WTC11 (cell line): ENCODE measurements at regions of chr2 and their contacts with region 1.

Region 1: DNA sequence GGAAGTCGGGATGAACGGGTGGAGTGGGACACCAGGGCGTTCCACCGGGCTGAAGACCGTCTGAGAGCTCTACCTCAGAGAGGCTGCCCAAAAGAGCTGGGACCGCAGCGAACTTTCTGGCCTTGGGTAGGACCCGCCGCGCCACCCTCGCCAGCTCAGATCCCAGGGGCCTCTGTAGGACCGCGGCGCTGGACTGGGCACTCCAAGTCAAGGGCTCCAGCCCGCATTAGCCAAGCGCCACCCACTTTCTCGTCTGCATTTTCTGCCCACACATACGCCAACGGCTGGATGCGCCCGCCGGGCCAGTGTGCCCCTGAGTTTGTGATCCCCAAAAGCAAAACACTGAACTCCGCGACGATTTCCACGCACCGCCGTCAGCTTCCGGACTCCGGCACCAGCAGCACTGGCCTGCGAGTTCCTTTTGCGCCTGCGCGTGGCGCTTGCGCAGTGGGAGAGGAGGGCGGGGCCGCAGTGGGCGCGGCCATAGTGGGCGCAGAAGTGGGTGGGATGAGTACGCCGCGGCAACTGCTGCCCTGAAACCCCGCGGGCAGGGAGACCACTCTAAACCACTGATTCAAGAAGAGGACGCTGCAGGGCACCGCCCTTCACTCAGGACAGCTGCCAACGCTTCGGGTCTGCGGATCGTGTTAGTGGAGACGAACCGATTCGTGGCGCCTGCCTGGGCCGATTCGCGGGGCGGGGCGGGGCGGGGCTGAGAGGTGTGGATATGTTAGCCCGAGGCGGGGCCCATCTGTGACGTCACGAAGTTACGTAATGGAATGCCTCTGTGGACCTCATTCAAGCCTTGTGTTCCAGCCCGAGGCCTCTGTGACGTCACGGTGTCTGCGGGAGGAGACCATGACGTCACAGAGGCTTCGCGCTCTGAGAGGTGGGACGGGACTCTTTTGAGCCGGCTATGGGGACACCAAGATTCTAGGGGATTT is 10.5 kb downstream of the OSR1 start:
- DNase-seq: peak; percentile 90
- ATAC-seq: peak; percentile 66
- H3K4me3 Mint-ChIP-seq: peak overlapping the region; percentile 94
- H3K27ac Mint-ChIP-seq: peak overlapping the region; percentile 89
- H3K4me1 Mint-ChIP-seq: peaks cover 21% of the 10 kb centered on the region
- H3K27me3 Mint-ChIP-seq: peaks cover 65% of the 10 kb centered on the region
- CTCF ChIP-seq: no peak

Region 2: DNA sequence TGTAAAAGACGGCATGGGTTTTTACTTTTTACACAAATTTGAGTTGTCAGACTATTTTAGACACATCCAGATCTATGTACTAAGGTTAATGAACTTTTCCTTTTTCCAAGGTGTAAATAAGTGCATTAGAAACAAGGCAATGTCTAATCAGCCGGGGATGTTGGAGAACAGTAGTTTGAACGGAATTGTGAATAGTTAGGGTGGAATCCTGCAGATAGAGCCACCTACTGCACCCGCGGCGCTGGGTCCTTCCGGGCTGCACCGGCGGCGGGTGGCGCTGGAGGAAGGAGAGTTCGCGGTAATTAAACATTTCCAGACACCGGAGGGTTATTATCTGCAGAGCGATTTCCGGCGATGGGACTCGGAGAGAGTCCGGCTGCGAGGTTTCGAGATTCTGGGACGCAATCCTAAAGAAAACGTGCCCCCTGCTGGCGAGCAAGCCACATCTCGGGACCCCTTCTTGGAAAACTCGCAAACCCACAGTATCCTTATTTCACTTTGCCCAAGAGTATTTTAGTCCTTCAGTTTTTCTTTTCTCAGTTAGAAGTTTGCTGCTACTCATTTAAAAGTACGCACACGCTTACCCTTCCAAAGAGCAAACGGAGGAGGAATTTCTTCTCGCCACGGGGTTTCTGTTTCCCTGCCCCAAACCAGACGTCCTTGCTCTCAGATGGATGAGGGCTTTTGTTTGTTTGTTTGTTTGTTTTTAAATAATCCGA is 15.0 kb after region 1 on chr2:
- CTCF ChIA-PET with region 1: interaction called, 73 read pairs
- POLR2A ChIA-PET with region 1: interaction called, 5 read pairs
- DNase-seq: peak; percentile 71
- ATAC-seq: no peak
- H3K4me3 Mint-ChIP-seq: peak overlapping the region; percentile 70
- H3K27ac Mint-ChIP-seq: no peak overlapping the region
- H3K4me1 Mint-ChIP-seq: peaks cover 32% of the 10 kb centered on the region
- H3K27me3 Mint-ChIP-seq: peaks cover 92% of the 10 kb centered on the region
- CTCF ChIP-seq: peak; percentile 70

Region 3: GRCh38 chr2:19369341-19369955 is 21.6 kb after region 1 on chr2:
- CTCF ChIA-PET with region 1: interaction called, 11 read pairs
- POLR2A ChIA-PET with region 1: no interaction called
- DNase-seq: no peak
- ATAC-seq: peak; percentile 74
- H3K4me3 Mint-ChIP-seq: no peak overlapping the region
- H3K27ac Mint-ChIP-seq: no peak overlapping the region
- H3K4me1 Mint-ChIP-seq: no peaks in the 10 kb centered on the region
- H3K27me3 Mint-ChIP-seq: peaks cover 40% of the 10 kb centered on the region
- CTCF ChIP-seq: no peak

Region 4: DNA sequence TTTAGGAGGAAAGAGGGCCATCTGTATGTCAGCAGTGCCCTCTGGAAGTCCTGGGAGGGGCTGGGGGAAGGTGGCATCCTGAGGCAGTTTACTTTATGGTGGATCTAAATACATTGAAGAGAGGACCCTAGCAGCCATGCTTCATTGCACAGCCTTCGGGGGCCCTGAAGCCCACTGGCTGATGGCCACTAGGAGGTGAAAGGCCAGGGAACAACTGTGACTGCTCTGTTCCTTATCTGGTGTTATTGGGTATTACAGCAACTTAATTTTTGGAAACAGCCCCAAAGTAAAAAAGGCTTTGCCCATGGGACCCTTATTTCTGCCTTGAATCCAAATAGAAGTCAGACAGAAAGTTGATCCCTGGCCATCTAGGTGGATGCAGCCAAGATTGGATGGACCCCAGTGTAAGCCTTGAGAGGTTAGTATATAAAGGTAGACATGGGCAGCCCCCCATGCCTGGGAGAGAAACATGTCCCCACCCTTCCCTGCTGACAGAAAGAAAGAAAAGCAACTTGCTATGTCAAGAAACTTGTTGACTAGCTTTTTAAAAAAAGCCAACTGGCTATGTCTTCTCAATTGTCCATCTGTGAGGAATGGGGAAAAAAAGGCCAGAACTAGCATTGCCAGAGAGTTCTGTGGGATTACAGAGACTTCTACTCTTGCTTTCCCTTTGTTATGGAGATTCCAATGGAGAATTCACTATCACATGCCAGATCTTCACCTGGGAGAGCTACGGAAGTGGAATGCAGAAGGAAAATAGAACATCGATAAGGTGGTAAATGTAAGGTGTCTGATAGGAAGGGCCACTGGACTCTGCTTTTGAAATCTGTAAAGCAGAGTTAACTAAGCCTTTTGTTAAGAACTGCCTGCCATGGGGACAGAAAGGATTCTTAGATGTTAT is 69.1 kb after region 1 on chr2:
- CTCF ChIA-PET with region 1: no interaction called
- POLR2A ChIA-PET with region 1: no interaction called
- DNase-seq: no peak
- ATAC-seq: peak; percentile 77
- H3K4me3 Mint-ChIP-seq: no peak overlapping the region
- H3K27ac Mint-ChIP-seq: no peak overlapping the region
- H3K4me1 Mint-ChIP-seq: peaks cover 18% of the 10 kb centered on the region
- H3K27me3 Mint-ChIP-seq: no peaks in the 10 kb centered on the region
- CTCF ChIP-seq: no peak

Region 5: DNA sequence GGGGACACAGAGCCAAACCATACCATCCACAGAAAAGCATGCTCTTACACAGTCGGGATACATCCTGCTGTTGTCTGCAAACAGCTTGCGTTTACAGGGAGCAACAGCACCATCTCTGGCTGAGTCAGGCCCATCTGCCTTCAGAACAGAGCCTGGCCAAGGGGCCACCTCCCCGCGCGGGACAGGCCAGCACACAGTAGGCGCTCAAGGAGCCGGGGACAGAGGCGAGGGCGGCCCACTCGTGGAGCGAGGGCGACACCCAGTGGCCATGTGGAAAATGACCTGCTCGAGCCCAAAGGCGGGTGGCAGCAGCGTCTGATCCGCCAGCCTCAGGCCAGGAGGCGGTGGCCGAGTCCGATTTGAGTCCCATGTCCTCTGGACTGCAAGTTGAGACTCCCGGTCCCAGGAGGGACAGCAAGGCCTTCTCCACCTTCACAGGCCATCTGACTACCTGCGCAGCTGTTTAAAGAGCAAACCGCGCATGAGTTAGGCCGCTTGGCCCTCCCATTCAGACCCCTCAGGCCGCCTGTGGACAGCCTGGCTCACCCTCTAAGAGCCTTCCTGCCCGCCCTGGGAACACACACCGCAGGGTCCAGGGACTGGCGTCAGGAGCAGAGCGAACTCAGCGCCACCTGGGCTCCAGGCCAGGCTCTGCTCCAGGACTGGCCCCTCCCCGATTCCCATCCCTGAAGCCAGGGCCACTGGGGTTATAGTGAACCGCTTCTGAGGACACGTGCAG is 515.6 kb after region 1 on chr2:
- CTCF ChIA-PET with region 1: interaction called, 10 read pairs
- POLR2A ChIA-PET with region 1: no interaction called
- DNase-seq: peak; percentile 94
- ATAC-seq: peak; percentile 91
- H3K4me3 Mint-ChIP-seq: peak overlapping the region; percentile 54
- H3K27ac Mint-ChIP-seq: no peak overlapping the region
- H3K4me1 Mint-ChIP-seq: peaks cover 12% of the 10 kb centered on the region; the same call in 1 of the 2 replicates
- H3K27me3 Mint-ChIP-seq: peaks cover 19% of the 10 kb centered on the region
- CTCF ChIP-seq: peak; percentile 97